Pancreas (tissue), 10 donors: ENCODE measurements at regions of chr2 and their contacts with region 1.

Region 1: GRCh38 chr2:191691016-191691735 is 13.2 kb downstream of the NABP1 start:
- DNase-seq: peak in 3 of 6 donors; percentile 36 to 57 (median 39)
- ATAC-seq: peak; percentile 80 to 96 (median 90)
- H3K4me3 ChIP-seq: no peak overlapping the region
- H3K27ac ChIP-seq: no peak overlapping the region
- H3K4me1 ChIP-seq: peaks cover 0 to 8% (median 7%) of the 10 kb centered on the region in 3 donors
- H3K27me3 ChIP-seq: no peaks in the 10 kb centered on the region
- CTCF ChIP-seq: peak; percentile 39 to 59 (median 52)

Region 2: DNA sequence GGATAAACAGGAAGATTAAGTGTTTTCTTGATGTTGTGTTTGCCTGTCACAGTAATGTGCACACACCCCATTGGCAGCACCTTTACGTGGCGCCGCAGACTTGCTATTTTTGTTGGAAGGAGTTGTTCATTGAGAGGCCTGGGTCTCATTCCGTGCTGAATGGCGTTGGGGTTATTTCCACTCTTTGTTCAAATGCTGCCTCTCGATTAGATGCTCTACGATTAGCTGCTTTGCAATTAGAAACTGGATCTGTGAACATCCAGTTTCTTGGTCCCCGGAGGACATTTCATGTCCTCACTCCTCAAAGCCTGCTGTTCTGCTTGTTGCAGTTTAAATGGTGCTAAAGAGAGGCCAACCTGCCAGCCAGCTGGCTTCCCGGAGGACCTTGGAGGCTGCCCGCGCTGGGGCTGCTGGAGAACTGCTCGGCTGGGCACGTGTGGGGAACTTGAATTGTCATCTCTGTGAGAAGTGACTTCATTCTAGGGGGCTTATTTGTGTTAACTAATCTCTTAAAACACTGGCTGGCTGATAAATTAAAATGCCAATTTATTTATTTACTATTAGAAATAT is 130.7 kb before region 1 on chr2:
- intact Hi-C with region 1: loop called (anchors 5 to 10 kb)
- DNase-seq: no peak
- ATAC-seq: no peak
- H3K4me3 ChIP-seq: no peak overlapping the region
- H3K27ac ChIP-seq: no peak overlapping the region
- H3K4me1 ChIP-seq: no peaks in the 10 kb centered on the region
- H3K27me3 ChIP-seq: no peaks in the 10 kb centered on the region
- CTCF ChIP-seq: no peak

Region 3: DNA sequence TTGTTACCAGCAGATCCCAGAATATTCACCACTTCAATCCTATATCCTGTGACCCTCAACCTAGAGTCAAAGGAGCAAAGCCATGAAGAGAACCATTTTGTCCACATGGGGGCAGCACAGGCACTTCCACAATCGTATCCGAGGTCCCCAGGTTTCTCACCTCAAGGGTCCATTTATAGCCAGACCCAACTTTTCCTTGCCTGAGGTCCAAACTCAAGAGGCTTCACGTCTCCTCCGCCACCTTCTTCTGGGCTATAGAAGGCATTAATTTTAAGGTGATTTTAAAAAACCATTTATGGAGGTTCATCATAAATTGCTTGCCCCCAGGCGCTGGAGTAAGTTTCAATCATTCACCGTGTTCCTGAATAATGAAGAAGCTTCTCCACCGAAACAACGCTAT is 124.8 kb before region 1 on chr2:
- intact Hi-C with region 1: loop called (anchors 5 to 10 kb)
- DNase-seq: peak in 5 of 6 donors; percentile 21 to 70 (median 54)
- ATAC-seq: peak; percentile 68 to 94 (median 87)
- H3K4me3 ChIP-seq: no peak overlapping the region
- H3K27ac ChIP-seq: no peak overlapping the region
- H3K4me1 ChIP-seq: peaks cover 0 to 2% (median 0%) of the 10 kb centered on the region in 3 donors
- H3K27me3 ChIP-seq: no peaks in the 10 kb centered on the region
- CTCF ChIP-seq: peak; percentile 55 to 72 (median 66)